Common myeloid progenitor, CD34-positive (primary cell): ENCODE measurements at regions of chr17 and their contacts with region 1.

Region 1: DNA sequence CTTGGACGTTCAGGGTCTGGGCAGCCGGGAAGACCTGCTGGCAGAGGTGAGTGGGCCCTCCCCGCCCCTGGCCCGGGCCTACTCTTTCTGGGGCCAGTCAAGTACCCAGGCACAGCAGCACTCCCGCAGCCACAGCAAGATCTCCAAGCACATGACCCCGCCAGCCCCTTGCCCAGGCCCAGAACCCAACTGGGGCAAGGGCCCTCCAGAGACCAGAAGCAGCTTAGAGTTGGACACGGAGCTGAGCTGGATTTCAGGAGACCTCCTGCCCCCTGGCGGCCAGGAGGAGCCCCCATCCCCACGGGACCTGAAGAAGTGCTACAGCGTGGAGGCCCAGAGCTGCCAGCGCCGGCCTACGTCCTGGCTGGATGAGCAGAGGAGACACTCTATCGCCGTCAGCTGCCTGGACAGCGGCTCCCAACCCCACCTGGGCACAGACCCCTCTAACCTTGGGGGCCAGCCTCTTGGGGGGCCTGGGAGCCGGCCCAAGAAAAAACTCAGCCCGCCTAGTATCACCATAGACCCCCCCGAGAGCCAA is 8.6 kb upstream of the ABCC3 start:
- DNase-seq: peak; percentile 79 to 90 (median 86)
- H3K4me3 ChIP-seq: no peak overlapping the region
- H3K27ac ChIP-seq: no peak overlapping the region
- H3K4me1 ChIP-seq: peaks cover 0 to 18% (median 12%) of the 10 kb centered on the region in 4 experiments
- H3K27me3 ChIP-seq: peaks cover 0 to 30% (median 10%) of the 10 kb centered on the region in 5 experiments

Region 2: DNA sequence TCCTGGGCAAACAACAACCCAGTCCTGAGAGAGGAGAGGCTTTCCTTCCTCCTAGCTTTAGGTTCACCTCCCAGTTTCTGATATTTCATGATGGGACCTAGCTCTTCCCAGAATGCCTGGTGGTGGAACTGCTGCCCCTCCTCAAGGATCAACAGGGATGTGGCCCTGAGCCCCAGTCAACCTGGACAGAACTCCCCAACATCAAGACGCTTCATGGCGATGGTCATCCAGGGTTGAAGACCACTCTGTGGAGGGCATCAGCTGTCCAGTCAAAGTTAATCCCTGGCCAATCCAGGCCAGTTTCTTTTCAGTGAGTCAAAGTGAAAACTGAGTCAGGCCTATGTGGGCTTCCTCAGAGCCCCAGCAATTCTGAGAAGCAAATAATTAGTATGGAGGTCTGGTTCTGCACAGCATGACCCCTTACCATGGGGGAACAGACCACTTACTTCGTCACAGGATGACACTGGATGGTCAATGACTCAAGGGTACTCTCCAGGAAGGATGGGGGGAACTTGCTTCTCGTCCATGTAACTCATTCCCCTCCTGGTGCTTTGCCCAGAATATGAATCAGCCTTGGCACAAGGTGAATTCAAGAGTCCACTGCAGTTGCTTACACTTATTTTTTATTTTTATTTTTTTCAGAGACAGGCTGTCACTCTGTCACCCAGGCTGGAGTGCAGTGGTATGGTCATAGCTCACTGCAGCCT is 294.9 kb before region 1 on chr17:
- CTCF ChIA-PET with region 1: no interaction called
- POLR2A ChIA-PET with region 1: no interaction called
- DNase-seq: no peak
- H3K4me3 ChIP-seq: no peak overlapping the region
- H3K27ac ChIP-seq: no peak overlapping the region
- H3K4me1 ChIP-seq: peaks cover 0 to 6% (median 4%) of the 10 kb centered on the region in 4 experiments
- H3K27me3 ChIP-seq: peaks cover 0 to 2% (median 0%) of the 10 kb centered on the region in 5 experiments

Region 3: GRCh38 chr17:50518384-50519230 is 107.5 kb before region 1 on chr17:
- CTCF ChIA-PET with region 1: no interaction called
- POLR2A ChIA-PET with region 1: no interaction called
- DNase-seq: no peak
- H3K4me3 ChIP-seq: no peak overlapping the region
- H3K27ac ChIP-seq: no peak overlapping the region
- H3K4me1 ChIP-seq: no peaks in the 10 kb centered on the region
- H3K27me3 ChIP-seq: peaks cover 0 to 2% (median 0%) of the 10 kb centered on the region in 5 experiments

Region 4: DNA sequence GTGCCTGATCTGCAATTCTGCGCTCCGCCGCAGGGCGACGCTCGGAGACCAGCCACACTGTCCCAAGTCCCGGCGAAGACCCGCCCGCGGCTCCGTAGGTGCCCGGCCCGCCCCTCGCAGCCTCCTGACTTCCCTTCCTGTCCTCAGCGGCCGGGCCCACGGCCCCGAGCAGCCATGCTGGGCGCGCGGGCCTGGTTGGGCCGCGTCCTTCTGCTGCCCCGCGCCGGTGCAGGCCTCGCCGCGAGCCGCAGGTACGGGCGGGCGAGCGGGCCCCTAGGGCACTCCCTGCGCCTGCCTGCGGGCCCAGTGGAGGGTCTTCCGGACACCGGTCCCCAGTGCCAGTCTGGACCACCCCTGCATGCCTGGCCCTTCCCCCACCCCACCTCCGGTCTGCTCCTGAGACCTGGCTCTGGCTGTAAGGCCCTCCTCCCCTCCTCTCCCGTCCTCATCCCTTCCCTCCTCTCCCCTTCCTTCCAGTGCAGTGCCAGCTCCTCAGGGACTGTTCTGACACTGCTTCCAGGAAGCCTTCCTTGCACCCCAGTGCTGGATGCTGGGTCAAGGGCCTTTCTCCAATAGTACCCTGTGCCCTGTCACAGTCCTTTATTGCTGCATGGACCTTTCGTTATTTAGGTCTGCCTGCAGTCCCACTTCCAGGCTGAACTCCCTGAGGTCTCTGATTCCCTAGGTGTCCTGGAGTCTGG is 78.9 kb before region 1 on chr17 and contains the start of gene SPATA20:
- CTCF ChIA-PET with region 1: interaction called, 325 read pairs
- POLR2A ChIA-PET with region 1: interaction called, 3 read pairs
- DNase-seq: peak; percentile 84 to 93 (median 87)
- H3K4me3 ChIP-seq: peak within 1 kb of the TSS; percentile 53 to 82 (median 67)
- H3K27ac ChIP-seq: peak within 1 kb of the TSS in 1 of 2 experiments; percentile 73
- H3K4me1 ChIP-seq: peaks cover 0 to 19% (median 11%) of the 10 kb centered on the region in 4 experiments
- H3K27me3 ChIP-seq: peaks cover 0 to 6% (median 0%) of the 10 kb centered on the region in 5 experiments

Region 5: DNA sequence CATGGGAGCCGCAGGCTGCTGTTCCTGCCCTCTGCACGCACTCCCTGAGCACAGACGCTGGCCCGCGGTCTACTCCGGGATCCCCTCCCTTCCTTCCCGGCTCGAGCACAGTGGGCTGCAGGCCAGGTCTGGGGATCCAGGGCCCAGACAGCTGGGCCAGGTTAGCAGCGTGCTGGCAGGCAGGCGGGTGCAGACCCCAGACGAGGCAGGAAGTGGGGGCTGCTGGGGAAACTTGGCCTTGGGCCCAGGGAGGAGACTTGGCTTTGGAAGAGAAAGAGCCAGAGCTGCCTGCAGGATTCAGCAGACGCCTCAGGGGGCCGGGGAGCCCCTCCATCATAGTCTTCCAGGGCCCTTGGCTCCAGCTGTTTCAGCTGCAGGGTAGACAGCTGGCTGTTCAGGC is 21.6 kb before region 1 on chr17:
- CTCF ChIA-PET with region 1: interaction called, 15 read pairs
- POLR2A ChIA-PET with region 1: no interaction called
- DNase-seq: peak in 2 of 3 donors; percentile 43 to 50
- H3K4me3 ChIP-seq: no peak overlapping the region
- H3K27ac ChIP-seq: no peak overlapping the region
- H3K4me1 ChIP-seq: peaks cover 0 to 12% (median 9%) of the 10 kb centered on the region in 4 experiments
- H3K27me3 ChIP-seq: peaks cover 0 to 7% (median 0%) of the 10 kb centered on the region in 5 experiments

Region 6: GRCh38 chr17:50638851-50639767 is 13.0 kb after region 1 on chr17:
- CTCF ChIA-PET with region 1: interaction called, 84 read pairs
- POLR2A ChIA-PET with region 1: no interaction called
- DNase-seq: peak in 1 of 3 donors; percentile 33
- H3K4me3 ChIP-seq: no peak overlapping the region
- H3K27ac ChIP-seq: no peak overlapping the region
- H3K4me1 ChIP-seq: peaks cover 2 to 36% (median 33%) of the 10 kb centered on the region in 4 experiments
- H3K27me3 ChIP-seq: peaks cover 3 to 31% (median 23%) of the 10 kb centered on the region in 5 experiments

Region 7: DNA sequence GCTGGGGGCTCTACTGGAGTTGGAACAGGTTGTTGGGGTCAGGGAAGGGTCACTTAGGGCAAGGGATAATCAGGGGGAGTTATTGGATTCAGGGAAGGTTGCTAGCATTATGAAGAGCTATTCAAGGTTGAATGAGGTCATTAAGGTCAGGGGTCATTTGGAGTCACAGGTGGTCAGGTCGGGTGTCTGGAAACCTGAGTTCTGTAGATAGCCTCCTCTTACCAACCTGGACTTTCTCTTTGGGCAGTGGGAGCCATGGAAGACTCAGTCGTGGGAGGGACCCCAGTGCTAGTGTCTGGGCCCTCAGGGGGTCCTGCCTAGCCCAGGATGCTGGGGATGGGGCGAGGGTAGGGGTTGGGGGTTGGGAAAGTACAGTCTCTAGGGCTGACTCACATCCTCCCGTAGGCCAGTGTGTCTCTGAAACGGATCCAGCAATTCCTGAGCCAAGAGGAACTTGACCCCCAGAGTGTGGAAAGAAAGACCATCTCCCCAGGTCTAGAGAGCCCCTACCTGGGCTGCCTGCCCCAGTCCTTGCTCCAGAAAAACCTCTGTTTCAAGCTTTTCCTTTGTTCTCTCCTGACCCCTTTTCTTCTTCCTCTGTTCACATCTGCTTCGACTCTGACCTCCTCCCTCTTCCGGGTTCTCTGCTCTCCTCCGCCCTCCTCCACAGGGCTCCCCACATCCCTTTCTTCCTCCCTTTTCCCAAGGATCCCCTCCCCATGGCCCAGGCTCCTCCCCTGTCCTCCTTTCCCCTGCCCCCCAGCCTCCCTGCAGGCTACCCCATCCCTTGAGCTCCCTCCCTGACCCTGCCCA is 42.1 kb after region 1 on chr17:
- CTCF ChIA-PET with region 1: interaction called, 84 read pairs
- POLR2A ChIA-PET with region 1: no interaction called
- DNase-seq: no peak
- H3K4me3 ChIP-seq: no peak overlapping the region
- H3K27ac ChIP-seq: no peak overlapping the region
- H3K4me1 ChIP-seq: peaks cover 0 to 14% (median 3%) of the 10 kb centered on the region in 4 experiments
- H3K27me3 ChIP-seq: no peaks in the 10 kb centered on the region

Region 8: DNA sequence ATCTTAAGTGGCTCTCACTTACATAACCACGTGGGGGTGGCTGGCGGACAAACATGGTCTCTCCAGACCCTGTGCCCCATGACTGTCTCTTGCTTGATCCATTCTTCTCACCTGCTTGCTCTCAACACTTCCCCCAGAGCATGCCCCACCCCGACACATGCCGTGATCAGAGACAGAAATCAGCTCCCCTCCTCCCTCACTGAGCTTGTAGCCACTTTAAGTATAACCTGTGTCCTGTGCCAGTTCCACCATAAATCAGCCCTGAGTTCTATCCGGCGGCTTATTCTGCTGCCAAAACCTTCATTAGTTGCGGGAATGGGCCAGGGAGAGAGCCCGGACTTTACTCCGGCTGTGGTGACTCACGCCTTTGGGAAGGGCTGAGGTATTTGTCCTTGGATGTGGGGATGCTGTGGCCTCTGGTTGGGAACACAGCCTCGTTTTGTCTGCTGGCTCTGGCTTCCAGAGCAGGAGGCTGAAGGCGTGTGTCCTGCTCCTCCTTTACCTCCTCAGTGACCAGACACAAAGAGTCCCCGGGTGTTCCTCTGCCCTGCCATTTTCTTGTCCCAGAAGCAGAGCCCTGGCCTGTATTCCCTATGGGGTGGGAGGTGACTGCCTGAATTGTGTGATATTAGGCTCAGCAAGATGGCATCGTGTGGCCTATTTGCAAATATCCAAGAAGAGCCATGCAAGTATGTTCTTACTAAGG is 60.5 kb after region 1 on chr17:
- CTCF ChIA-PET with region 1: interaction called, 84 read pairs
- POLR2A ChIA-PET with region 1: no interaction called
- DNase-seq: no peak
- H3K4me3 ChIP-seq: no peak overlapping the region
- H3K27ac ChIP-seq: no peak overlapping the region
- H3K4me1 ChIP-seq: peaks cover 0 to 5% (median 0%) of the 10 kb centered on the region in 4 experiments
- H3K27me3 ChIP-seq: peaks cover 0 to 4% (median 0%) of the 10 kb centered on the region in 5 experiments

Region 9: DNA sequence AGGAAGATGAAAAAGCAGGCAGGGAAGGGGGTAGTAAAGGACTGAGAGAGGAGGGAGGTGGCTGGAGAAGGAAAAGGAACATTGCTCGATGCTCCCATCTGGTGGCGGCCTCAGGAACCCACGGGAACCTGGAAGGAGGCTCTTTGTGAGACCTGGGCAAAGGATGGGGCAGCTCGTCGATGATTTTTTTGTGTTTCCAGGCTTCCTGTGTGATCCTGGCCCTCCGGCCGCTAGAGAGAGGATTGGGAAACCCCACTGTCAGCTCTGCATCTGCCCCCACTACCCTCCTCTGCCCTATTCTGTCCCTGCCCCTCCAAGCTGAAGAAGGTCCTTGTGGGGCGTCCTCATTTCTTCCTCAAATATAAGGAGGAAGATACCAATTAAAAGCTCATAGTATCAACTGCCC is 215.8 kb after region 1 on chr17:
- CTCF ChIA-PET with region 1: no interaction called
- POLR2A ChIA-PET with region 1: no interaction called
- DNase-seq: peak; percentile 55 to 78 (median 71)
- H3K4me3 ChIP-seq: no peak overlapping the region
- H3K27ac ChIP-seq: no peak overlapping the region
- H3K4me1 ChIP-seq: peaks cover 0 to 3% (median 0%) of the 10 kb centered on the region in 4 experiments
- H3K27me3 ChIP-seq: no peaks in the 10 kb centered on the region